AG04449 (cell line): ENCODE measurements at regions of chr12 and their contacts with region 1.

Region 1: GRCh38 chr12:6470375-6471163 is at the start of gene VAMP1:
- DNase-seq: peak; percentile 87
- H3K4me3 ChIP-seq: peak within 1 kb of the TSS; percentile 88
- CTCF ChIP-seq: no peak

Region 2: DNA sequence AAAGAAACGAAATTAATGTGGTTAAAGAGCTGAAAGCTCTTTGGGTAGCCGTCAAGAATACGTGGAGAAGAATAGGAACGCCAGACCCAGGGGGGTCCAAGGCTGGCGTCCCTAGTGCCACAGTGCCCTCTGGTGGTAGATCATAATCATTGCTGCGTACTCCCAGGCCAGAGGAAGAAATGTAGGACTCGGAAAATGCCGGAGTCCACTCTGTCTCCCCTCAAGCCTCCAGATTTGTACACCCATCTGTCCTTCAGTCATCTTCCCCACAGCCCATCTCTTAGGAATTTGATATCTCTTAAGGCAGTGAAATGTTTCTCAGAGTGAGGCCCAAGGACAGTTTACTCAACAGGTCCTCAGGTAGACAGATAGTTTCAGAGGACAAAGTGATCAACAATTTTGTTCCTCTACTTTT is 185.5 kb before region 1 on chr12:
- CTCF ChIA-PET with region 1: interaction called, 42 read pairs
- POLR2A ChIA-PET with region 1: interaction called, 5 read pairs
- DNase-seq: no peak
- H3K4me3 ChIP-seq: no peak overlapping the region
- CTCF ChIP-seq: peak; percentile 73

Region 3: DNA sequence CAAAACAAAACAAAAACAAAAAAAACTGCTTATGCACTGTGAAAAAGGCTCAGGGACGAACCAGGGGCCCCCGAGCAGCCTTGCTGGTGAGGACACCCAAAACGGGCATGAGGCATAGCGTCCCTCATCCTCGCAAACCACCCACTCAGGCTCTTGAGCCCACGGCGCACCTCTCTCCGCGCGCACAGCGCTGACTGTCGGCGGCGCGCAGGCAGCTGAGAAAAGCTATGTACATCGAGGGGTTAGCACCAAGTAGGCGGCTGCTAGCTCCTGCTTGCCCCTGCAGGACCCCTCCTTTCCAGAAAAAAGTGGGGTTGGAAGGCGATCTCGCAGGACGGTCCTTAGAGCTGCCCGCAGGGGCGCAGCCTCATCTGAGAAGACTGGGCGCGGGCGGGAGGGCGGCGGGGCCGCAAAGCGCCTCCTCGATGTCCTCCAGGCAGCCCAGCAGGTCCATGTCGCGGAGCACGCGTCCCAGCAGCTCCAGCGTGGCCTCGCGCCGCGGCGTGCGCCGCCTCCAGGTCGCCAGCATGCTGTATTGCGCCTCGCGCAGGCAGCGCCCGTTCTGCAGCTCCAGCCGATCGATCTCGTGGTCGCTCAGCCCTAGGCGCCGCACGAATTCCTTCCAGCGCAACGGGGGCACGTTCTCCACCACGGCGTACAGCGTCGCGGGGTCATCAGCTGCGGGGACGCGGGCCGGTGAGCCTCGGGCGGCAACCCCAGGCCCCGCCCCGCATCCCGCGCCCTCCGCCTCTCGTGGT is 141.4 kb before region 1 on chr12:
- CTCF ChIA-PET with region 1: interaction called, 43 read pairs
- POLR2A ChIA-PET with region 1: interaction called, 10 read pairs
- DNase-seq: no peak
- H3K4me3 ChIP-seq: no peak overlapping the region
- CTCF ChIP-seq: no peak

Region 4: GRCh38 chr12:6423267-6424007 is 47.1 kb before region 1 on chr12:
- CTCF ChIA-PET with region 1: interaction called, 199 read pairs
- POLR2A ChIA-PET with region 1: interaction called, 8 read pairs
- DNase-seq: peak; percentile 68
- H3K4me3 ChIP-seq: no peak overlapping the region
- CTCF ChIP-seq: peak; percentile 78

Region 5: GRCh38 chr12:6451348-6452244 is 19.0 kb before region 1 on chr12 and contains the start of gene TAPBPL:
- CTCF ChIA-PET with region 1: interaction called, 97 read pairs
- POLR2A ChIA-PET with region 1: interaction called, 43 read pairs
- DNase-seq: peak; percentile 24
- H3K4me3 ChIP-seq: peak within 1 kb of the TSS; percentile 75
- CTCF ChIP-seq: no peak

Region 6: DNA sequence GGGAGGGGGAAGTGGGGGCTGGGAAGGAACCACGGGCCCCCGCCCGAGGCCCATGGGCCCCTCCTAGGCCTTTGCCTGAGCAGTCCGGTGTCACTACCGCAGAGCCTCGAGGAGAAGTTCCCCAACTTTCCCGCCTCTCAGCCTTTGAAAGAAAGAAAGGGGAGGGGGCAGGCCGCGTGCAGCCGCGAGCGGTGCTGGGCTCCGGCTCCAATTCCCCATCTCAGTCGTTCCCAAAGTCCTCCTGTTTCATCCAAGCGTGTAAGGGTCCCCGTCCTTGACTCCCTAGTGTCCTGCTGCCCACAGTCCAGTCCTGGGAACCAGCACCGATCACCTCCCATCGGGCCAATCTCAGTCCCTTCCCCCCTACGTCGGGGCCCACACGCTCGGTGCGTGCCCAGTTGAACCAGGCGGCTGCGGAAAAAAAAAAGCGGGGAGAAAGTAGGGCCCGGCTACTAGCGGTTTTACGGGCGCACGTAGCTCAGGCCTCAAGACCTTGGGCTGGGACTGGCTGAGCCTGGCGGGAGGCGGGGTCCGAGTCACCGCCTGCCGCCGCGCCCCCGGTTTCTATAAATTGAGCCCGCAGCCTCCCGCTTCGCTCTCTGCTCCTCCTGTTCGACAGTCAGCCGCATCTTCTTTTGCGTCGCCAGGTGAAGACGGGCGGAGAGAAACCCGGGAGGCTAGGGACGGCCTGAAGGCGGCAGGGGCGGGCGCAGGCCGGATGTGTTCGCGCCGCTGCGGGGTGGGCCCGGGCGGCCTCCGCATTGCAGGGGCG is 63.5 kb after region 1 on chr12 and contains the start of gene GAPDH:
- CTCF ChIA-PET with region 1: interaction called, 14 read pairs
- POLR2A ChIA-PET with region 1: interaction called, 33 read pairs
- DNase-seq: peak; percentile 86
- H3K4me3 ChIP-seq: peak within 1 kb of the TSS; percentile 97
- CTCF ChIP-seq: no peak

Region 7: GRCh38 chr12:6554168-6555017 is 83.8 kb after region 1 on chr12:
- CTCF ChIA-PET with region 1: interaction called, 9 read pairs
- POLR2A ChIA-PET with region 1: interaction called, 11 read pairs
- DNase-seq: no peak
- H3K4me3 ChIP-seq: peak overlapping the region; percentile 83
- CTCF ChIP-seq: peak; percentile 78

Region 8: DNA sequence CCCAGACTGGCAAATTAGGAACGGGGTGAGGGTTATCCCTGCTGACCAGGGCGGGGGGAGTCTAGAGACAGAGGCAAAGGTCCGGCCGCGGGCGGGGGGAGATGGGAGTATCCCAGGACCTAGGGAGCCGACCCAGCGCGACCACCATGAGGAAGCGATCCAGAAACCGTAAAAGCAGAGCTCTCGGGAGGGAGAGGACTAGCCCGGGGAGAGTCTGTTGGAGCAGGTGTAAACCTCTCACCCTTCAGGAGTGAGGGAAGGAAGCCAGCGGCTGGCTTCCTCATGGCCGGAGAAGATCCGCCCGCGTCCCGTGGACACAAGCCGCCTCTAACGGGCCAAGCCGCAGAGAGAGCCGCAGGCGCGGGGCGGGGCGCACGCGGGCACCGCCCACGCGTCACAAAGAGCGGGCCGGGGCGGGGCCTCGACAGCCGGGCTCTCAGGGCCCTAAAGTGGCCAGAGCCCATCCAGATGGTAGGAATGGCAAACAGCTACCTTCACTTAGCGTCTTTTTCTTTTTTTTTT is 176.6 kb after region 1 on chr12 and contains the start of gene ACRBP:
- CTCF ChIA-PET with region 1: no interaction called
- POLR2A ChIA-PET with region 1: no interaction called
- DNase-seq: no peak
- H3K4me3 ChIP-seq: peak within 1 kb of the TSS; percentile 37
- CTCF ChIP-seq: no peak